ENCODE measurements at regions of chr5 and their contacts with region 1.

Region 1: DNA sequence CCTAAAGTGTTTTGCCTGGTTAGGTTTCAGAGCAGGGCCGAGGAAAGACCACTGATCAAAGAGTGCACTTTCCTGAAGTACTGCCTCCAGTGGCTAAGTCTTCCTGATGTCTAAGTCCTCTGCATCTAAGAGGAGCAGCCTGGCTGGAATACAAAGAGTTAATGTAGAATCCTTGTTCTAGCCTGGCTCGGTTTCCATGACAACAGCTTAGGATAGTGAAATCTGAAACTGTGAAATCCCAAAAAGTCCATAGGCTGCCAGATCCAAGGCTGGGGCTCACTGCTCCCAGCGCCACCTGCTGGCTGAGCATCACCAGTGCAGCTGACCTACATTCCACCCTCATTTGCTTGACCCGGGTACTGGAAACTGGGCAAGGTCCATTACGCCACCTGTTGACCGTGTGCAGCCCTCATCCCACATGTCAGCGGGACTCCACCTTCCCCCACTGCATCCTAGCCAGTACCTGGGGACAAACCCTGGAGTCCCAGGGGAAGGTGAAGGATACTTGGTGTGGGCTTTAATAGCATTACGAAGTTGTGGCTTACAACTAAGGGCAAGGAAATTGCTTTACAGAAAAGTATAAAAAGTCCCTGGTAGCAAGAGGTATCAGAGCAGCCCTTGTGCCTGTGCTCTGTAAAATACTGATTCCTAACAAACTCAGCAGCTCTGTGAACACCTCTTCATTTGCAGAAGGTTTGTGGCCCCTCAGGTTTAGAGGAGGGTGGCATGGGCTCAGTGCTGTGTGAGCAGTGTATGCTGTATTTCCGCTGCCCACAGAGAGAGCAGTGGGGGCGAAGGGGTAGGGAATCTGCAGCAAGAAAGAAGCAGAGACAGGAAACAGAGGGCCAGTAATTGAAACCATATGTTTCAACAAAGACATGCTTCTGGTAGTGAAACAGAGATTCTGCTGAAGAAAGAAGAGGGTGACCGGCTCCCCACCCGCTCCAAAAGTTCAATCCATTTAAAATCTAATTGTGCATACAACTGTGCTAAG is 36.0 kb downstream of the PCDHGC5 start:
- DNase-seq: peak in 8 of 9 experiments; percentile 15 to 72 (median 55)
- ATAC-seq: peak; percentile 85
- H3K4me3 ChIP-seq: no peak overlapping the region
- H3K4me3 Mint-ChIP-seq: no peak overlapping the region
- H3K27ac ChIP-seq: peak overlapping the region in 1 of 2 experiments; percentile 17
- H3K27ac Mint-ChIP-seq: peak overlapping the region; percentile 72
- H3K4me1 ChIP-seq: no peaks in the 10 kb centered on the region
- H3K4me1 Mint-ChIP-seq: peaks cover 16% of the 10 kb centered on the region
- H3K27me3 ChIP-seq: no peaks in the 10 kb centered on the region
- H3K27me3 Mint-ChIP-seq: no peaks in the 10 kb centered on the region
- CTCF ChIP-seq: peak; percentile 98

Region 2: GRCh38 chr5:141084487-141084990 is 440.4 kb before region 1 on chr5:
- CTCF ChIA-PET with region 1: interaction called, 3 read pairs
- POLR2A ChIA-PET with region 1: no interaction called
- intact Hi-C with region 1: loop called in 1 of 2 experiments (anchors 2 kb)
- DNase-seq: peak in 7 of 9 experiments; percentile 2 to 61 (median 23)
- ATAC-seq: peak; percentile 63
- H3K4me3 ChIP-seq: peak overlapping the region; percentile 31 to 43
- H3K4me3 Mint-ChIP-seq: peak overlapping the region; percentile 85
- H3K27ac ChIP-seq: no peak overlapping the region
- H3K27ac Mint-ChIP-seq: no peak overlapping the region
- H3K4me1 ChIP-seq: no peaks in the 10 kb centered on the region
- H3K4me1 Mint-ChIP-seq: peaks cover 9% of the 10 kb centered on the region
- H3K27me3 ChIP-seq: peaks cover 0 to 3% of the 10 kb centered on the region in 2 experiments
- H3K27me3 Mint-ChIP-seq: peaks cover 38% of the 10 kb centered on the region
- CTCF ChIP-seq: peak; percentile 46

Region 3: GRCh38 chr5:141326088-141326854 is 198.6 kb before region 1 on chr5:
- CTCF ChIA-PET with region 1: interaction called, 17 read pairs
- POLR2A ChIA-PET with region 1: no interaction called
- intact Hi-C with region 1: loop called (anchors 1 to 2 kb)
- DNase-seq: peak; percentile 43 to 79 (median 73)
- ATAC-seq: peak; percentile 94
- H3K4me3 ChIP-seq: peak overlapping the region; percentile 42 to 56
- H3K4me3 Mint-ChIP-seq: peak overlapping the region; percentile 91
- H3K27ac ChIP-seq: peak overlapping the region; percentile 9 to 58
- H3K27ac Mint-ChIP-seq: peak overlapping the region; percentile 93
- H3K4me1 ChIP-seq: peaks cover 2% of the 10 kb centered on the region
- H3K4me1 Mint-ChIP-seq: peaks cover 8% of the 10 kb centered on the region
- H3K27me3 ChIP-seq: peaks cover 0 to 5% of the 10 kb centered on the region in 2 experiments
- H3K27me3 Mint-ChIP-seq: peaks cover 34% of the 10 kb centered on the region
- CTCF ChIP-seq: peak; percentile 62

Region 4: GRCh38 chr5:141412854-141413539 is 111.9 kb before region 1 on chr5 and contains the start of gene PCDHGA10:
- CTCF ChIA-PET with region 1: interaction called, 9 read pairs
- POLR2A ChIA-PET with region 1: no interaction called
- intact Hi-C with region 1: loop called (anchors 1 kb)
- DNase-seq: peak in 8 of 9 experiments; percentile 18 to 67 (median 50)
- ATAC-seq: peak; percentile 74
- H3K4me3 ChIP-seq: peak within 1 kb of the TSS; percentile 32 to 61
- H3K4me3 Mint-ChIP-seq: peak within 1 kb of the TSS; percentile 83
- H3K27ac ChIP-seq: no peak within 1 kb of the TSS
- H3K27ac Mint-ChIP-seq: no peak within 1 kb of the TSS
- H3K4me1 ChIP-seq: peaks cover 4% of the 10 kb centered on the region
- H3K4me1 Mint-ChIP-seq: peaks cover 18% of the 10 kb centered on the region
- H3K27me3 ChIP-seq: peaks cover 26 to 27% of the 10 kb centered on the region in 2 experiments
- H3K27me3 Mint-ChIP-seq: peaks cover 70% of the 10 kb centered on the region
- CTCF ChIP-seq: peak; percentile 82
- total RNA-seq, gene PCDHGA10: 0.08 TPM in 1 of 2 experiments, not detected in the other

Region 5: GRCh38 chr5:141434006-141434405 is 90.9 kb before region 1 on chr5:
- CTCF ChIA-PET with region 1: no interaction called
- POLR2A ChIA-PET with region 1: no interaction called
- intact Hi-C with region 1: no loop called
- DNase-seq: no peak
- ATAC-seq: no peak
- H3K4me3 ChIP-seq: no peak overlapping the region
- H3K4me3 Mint-ChIP-seq: no peak overlapping the region
- H3K27ac ChIP-seq: no peak overlapping the region
- H3K27ac Mint-ChIP-seq: no peak overlapping the region
- H3K4me1 ChIP-seq: no peaks in the 10 kb centered on the region
- H3K4me1 Mint-ChIP-seq: peaks cover 10% of the 10 kb centered on the region
- H3K27me3 ChIP-seq: peaks cover 15 to 19% of the 10 kb centered on the region in 2 experiments
- H3K27me3 Mint-ChIP-seq: peaks cover 56% of the 10 kb centered on the region
- CTCF ChIP-seq: no peak

Region 6: GRCh38 chr5:141512390-141512910 is 12.5 kb before region 1 on chr5:
- CTCF ChIA-PET with region 1: interaction called, 104 read pairs
- POLR2A ChIA-PET with region 1: interaction called, 3 read pairs
- intact Hi-C with region 1: no loop called
- DNase-seq: peak; percentile 68 to 91 (median 82)
- ATAC-seq: peak; percentile 51
- H3K4me3 ChIP-seq: peak overlapping the region; percentile 50 to 54
- H3K4me3 Mint-ChIP-seq: peak overlapping the region; percentile 87
- H3K27ac ChIP-seq: no peak overlapping the region
- H3K27ac Mint-ChIP-seq: no peak overlapping the region
- H3K4me1 ChIP-seq: peaks cover 21% of the 10 kb centered on the region
- H3K4me1 Mint-ChIP-seq: peaks cover 36% of the 10 kb centered on the region
- H3K27me3 ChIP-seq: no peaks in the 10 kb centered on the region
- H3K27me3 Mint-ChIP-seq: no peaks in the 10 kb centered on the region
- CTCF ChIP-seq: peak; percentile 83

Region 7: DNA sequence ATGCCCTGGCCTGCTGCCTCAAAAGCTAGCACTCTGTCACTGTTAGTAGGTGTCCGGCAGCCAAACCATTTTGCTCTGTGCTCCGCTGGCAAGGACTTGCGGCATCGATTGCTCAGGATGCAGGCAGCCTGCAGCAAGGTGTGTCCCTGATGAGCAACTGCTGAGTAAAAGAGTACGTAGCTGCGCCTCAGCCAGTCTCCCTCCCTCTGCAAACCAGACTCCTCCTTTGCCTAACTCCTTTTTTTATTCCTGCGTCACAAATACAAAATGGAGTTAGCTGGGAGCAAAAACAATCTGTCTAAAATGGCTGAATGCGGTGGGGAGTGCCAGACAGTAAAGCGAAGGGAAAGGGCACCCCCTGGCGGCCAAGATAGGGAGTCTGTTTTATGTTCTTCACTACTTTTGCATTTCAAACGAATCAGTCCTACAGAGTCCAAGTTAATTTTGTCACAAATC is 32.8 kb after region 1 on chr5:
- CTCF ChIA-PET with region 1: interaction called, 8 read pairs
- POLR2A ChIA-PET with region 1: no interaction called
- intact Hi-C with region 1: loop called in 1 of 2 experiments (anchors 5 kb)
- DNase-seq: peak; percentile 53 to 86 (median 76)
- ATAC-seq: peak; percentile 83
- H3K4me3 ChIP-seq: no peak overlapping the region
- H3K4me3 Mint-ChIP-seq: no peak overlapping the region
- H3K27ac ChIP-seq: peak overlapping the region in 1 of 2 experiments; percentile 55
- H3K27ac Mint-ChIP-seq: peak overlapping the region; percentile 85
- H3K4me1 ChIP-seq: no peaks in the 10 kb centered on the region
- H3K4me1 Mint-ChIP-seq: peaks cover 28% of the 10 kb centered on the region
- H3K27me3 ChIP-seq: no peaks in the 10 kb centered on the region
- H3K27me3 Mint-ChIP-seq: no peaks in the 10 kb centered on the region
- CTCF ChIP-seq: peak; percentile 73

Region 8: DNA sequence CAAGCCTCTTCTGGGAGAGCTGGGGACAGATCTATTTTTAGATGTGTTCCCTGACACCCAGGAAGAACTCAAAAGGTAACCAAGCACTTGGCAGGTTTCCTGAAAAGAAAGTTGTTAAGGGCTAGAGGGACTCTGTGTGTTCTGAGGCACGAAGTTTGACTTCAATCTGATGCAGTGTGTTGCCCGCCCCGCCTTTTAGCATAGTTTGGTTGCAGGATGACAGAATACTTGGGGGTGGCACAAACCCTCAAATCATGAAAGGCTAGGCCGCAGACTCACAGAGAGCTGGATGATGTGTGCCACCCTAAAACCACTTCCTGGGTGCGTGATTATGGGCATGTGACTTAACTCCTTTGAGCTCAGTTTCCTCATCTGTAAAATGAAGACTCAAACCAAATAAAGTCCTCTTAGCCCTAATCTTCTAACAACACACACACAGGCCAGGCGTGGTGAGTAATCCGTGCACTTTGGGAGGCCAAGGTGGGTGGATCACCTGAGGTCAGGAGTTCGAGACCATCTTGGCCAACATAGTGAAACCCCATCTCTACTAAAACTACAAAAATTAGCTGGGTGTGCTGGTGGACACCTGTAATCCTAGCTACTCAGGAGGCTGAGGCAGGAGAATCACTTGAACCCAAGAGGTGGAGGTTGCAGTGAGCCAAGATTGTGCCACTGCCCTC is 570.9 kb after region 1 on chr5:
- CTCF ChIA-PET with region 1: no interaction called
- POLR2A ChIA-PET with region 1: no interaction called
- intact Hi-C with region 1: loop called in 1 of 2 experiments (anchors 5 kb)
- DNase-seq: peak; percentile 68 to 95 (median 80)
- ATAC-seq: peak; percentile 87
- H3K4me3 ChIP-seq: no peak overlapping the region
- H3K4me3 Mint-ChIP-seq: peak overlapping the region; percentile 56
- H3K27ac ChIP-seq: peak overlapping the region; percentile 62 to 78
- H3K27ac Mint-ChIP-seq: peak overlapping the region; percentile 95
- H3K4me1 ChIP-seq: peaks cover 61% of the 10 kb centered on the region
- H3K4me1 Mint-ChIP-seq: peaks cover 57% of the 10 kb centered on the region
- H3K27me3 ChIP-seq: no peaks in the 10 kb centered on the region
- H3K27me3 Mint-ChIP-seq: no peaks in the 10 kb centered on the region
- CTCF ChIP-seq: no peak